ENCODE measurements at regions of chr11 and their contacts with region 1.

Region 1: DNA sequence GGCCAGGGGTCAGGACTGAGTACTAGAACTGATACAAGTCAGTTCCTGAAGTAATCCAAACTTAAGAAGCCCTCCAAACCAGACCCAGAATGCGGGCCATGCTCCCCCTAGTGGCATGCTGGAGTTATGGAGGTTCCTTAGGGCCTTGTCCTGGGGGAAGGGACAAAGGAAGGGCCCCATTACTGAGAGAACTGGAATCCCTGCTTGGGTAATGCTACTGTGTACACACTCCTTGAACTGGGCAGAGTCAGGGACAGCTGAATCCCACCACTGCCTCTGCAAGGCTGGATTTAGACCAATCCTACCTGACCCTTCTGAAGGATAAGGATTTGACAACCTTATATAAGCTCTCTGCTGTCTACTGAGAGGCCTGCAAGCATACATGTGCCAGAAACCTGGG is 97.3 kb upstream of the AKIP1 start:
- DNase-seq: peak; percentile 92
- H3K4me3 ChIP-seq: no peak overlapping the region
- H3K27ac ChIP-seq: peak overlapping the region; percentile 33 to 97 (median 96)
- H3K4me1 ChIP-seq: peaks cover 0 to 35% (median 30%) of the 10 kb centered on the region in 4 donors
- H3K27me3 ChIP-seq: no peaks in the 10 kb centered on the region
- CTCF ChIP-seq: peak; percentile 82 to 92 (median 86)
- EP300 ChIP-seq: no peak
- POLR2A ChIP-seq: no peak

Region 2: GRCh38 chr11:8604078-8604723 is 209.5 kb before region 1 on chr11:
- intact Hi-C with region 1: loop called (anchors 10 kb)
- DNase-seq: peak; percentile 84
- H3K4me3 ChIP-seq: no peak overlapping the region
- H3K27ac ChIP-seq: peak overlapping the region; percentile 33 to 78 (median 64)
- H3K4me1 ChIP-seq: peaks cover 0 to 18% (median 8%) of the 10 kb centered on the region in 4 donors
- H3K27me3 ChIP-seq: no peaks in the 10 kb centered on the region
- CTCF ChIP-seq: peak; percentile 19 to 45 (median 36)
- EP300 ChIP-seq: peak in 2 of 4 donors; percentile 14 to 75
- POLR2A ChIP-seq: no peak

Region 3: GRCh38 chr11:8707541-8708191 is 106.0 kb before region 1 on chr11:
- intact Hi-C with region 1: loop called (anchors 2 kb)
- DNase-seq: peak; percentile 99
- H3K4me3 ChIP-seq: peak overlapping the region in 3 of 4 donors; percentile 17 to 25 (median 19)
- H3K27ac ChIP-seq: peak overlapping the region; percentile 90 to 98 (median 96)
- H3K4me1 ChIP-seq: peaks cover 4 to 95% (median 73%) of the 10 kb centered on the region in 4 donors
- H3K27me3 ChIP-seq: no peaks in the 10 kb centered on the region
- CTCF ChIP-seq: no peak
- EP300 ChIP-seq: peak in 2 of 4 donors; percentile 60 to 89
- POLR2A ChIP-seq: no peak

Region 4: GRCh38 chr11:8732748-8733241 is 80.9 kb before region 1 on chr11:
- intact Hi-C with region 1: no loop called
- DNase-seq: peak; percentile 89
- H3K4me3 ChIP-seq: no peak overlapping the region
- H3K27ac ChIP-seq: peak overlapping the region; percentile 90 to 98 (median 96)
- H3K4me1 ChIP-seq: peaks cover 0 to 74% (median 67%) of the 10 kb centered on the region in 4 donors
- H3K27me3 ChIP-seq: no peaks in the 10 kb centered on the region
- CTCF ChIP-seq: no peak
- EP300 ChIP-seq: peak in 1 of 4 donors; percentile 56
- POLR2A ChIP-seq: no peak

Region 5: DNA sequence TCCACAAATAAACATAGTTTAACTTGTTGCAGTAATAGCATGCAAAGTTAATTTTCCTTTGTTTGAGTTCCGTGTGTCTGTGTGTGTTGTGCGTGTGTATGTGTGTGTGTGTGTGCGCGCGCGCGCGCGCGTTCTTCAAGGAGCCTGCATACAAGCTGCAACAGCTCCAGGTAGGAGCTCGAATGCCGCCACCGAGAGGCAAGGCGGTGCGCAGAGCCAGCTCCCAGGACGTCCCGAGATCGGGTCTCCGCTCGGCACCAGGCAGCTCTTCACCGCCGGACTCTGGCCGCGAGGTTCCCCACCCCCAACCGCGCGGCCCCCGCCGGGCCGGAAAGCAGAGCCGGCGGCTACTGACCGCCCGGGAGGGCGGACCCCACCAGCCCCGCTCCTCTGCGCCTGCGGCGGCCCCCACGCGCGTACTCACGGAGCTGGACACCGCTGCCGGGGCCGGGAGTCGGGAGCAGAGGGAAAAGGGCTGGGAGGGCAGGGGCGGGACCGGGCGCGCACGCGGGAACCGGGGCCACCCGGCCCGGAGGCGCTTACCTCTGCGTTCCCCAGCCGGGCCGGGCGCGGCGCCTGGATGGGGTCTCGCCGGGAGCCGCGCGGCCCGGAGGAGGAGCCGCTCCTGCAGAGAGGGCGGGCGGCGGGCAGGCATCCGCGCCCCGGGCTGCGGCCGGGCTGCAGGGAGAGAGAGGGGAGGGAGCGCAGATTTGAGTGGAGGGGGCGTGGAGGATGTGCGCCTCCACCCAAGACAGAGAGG is 56.9 kb after region 1 on chr11:
- intact Hi-C with region 1: loop called (anchors 2 kb)
- DNase-seq: peak; percentile 79
- H3K4me3 ChIP-seq: peak overlapping the region; percentile 81 to 91 (median 83)
- H3K27ac ChIP-seq: peak overlapping the region; percentile 88 to 94 (median 92)
- H3K4me1 ChIP-seq: peaks cover 0 to 61% (median 31%) of the 10 kb centered on the region in 4 donors
- H3K27me3 ChIP-seq: no peaks in the 10 kb centered on the region
- CTCF ChIP-seq: no peak
- EP300 ChIP-seq: no peak
- POLR2A ChIP-seq: no peak

Region 6: DNA sequence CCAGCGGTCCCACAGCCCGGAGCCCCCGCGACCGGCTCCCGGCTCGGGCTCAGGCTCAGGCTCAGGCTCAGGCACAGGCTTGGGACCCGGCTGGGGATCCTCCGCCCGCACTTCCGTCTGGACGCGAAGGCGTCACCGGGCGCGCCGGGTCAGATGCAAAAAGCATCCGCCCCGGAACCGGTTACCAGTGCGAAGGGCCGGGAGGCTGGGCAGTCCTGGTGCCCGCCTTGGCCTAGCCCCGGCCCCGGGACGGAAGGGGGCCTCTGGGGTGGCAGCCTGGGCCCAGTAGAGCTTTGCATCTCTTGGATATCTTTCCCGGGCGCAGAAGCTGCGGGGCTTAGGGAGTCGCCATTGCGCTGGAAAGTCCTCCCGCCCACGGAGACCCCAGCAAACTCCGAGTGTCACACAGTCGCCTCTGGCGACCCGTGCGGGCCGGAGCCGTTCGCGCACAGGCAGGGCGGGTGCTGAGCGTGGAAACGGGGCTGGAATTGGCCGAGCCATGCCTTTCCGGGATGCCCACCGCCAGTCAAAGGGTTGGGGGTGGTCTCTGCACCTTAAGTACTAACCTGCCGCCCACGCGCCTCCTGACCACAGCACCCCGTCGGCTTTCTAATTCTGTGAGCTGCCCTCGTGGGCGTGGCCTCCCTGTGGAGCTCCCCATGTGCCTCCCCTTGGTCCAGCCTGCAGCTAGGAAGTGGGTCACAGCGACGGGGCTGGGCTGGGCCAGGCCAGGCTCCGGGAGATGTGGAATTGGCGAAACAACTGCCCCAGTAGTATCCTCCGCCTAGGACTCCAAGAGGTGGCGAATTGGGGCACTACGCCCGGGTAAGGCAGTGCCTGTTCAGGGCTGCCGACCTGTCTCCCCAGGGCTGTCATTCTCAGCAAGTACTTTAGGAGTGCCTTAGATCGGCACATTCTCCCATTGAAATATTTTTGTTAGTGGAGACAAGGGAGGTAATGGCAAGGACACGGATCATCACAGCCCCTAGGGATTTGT is 151.0 kb after region 1 on chr11 and contains the start of gene TMEM9B:
- intact Hi-C with region 1: loop called (anchors 5 kb)
- DNase-seq: peak; percentile 94
- H3K4me3 ChIP-seq: peak within 1 kb of the TSS; percentile 65 to 91 (median 78)
- H3K27ac ChIP-seq: peak within 1 kb of the TSS; percentile 92 to 98 (median 96)
- H3K4me1 ChIP-seq: peaks cover 0 to 37% (median 32%) of the 10 kb centered on the region in 4 donors
- H3K27me3 ChIP-seq: no peaks in the 10 kb centered on the region
- CTCF ChIP-seq: no peak
- EP300 ChIP-seq: peak in 2 of 4 donors; percentile 24 to 49
- POLR2A ChIP-seq: peak; percentile 94 to 95
- total RNA-seq, gene TMEM9B: 13.3 to 24.3 (median 20.1) TPM